ENCODE measurements at regions of chr5 and their contacts with region 1.

Region 1: DNA sequence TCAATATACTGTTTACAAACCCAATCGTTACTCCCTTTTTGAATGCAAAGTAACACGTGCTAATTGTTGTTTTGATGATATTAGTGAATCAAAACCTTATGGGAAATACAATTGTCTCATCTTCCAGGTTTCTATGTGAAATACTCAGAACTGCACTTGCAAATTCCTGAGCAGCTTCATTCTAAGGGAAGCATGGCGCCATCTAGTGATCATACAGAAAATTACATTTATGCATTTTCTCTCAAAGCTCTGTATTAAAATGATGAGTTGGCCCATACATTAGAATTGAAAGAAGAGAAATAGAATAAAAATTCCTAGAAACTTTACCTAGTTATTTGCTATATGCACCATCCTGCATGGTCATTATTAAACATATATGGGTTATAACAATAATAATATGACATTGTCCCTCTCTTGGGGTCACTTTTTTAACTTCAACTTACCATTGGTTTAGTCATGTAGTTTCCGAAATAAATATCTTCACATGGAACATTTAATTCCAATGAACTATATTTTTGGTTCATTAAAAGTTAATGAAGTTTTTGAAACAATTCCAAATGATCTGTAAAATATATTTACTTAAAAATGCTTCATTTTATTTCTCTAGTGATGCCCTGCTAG is 220.0 kb downstream of the PDE4D start:
- DNase-seq: peak; percentile 14 to 68
- ATAC-seq: peak; percentile 39 to 78; a peak in 3 of 6 replicates
- H3K4me3 ChIP-seq: no peak overlapping the region
- H3K27ac ChIP-seq: peak overlapping the region; percentile 45 to 62
- H3K4me1 ChIP-seq: peaks cover 35% of the 10 kb centered on the region
- CTCF ChIP-seq: peak; percentile 97
- EP300 ChIP-seq: no peak
- POLR2A ChIP-seq: no peak
- RAD21 ChIP-seq: peak; percentile 90 to 93

Region 2: GRCh38 chr5:58523956-58524355 is 1149.6 kb before region 1 on chr5:
- CTCF ChIA-PET with region 1: no interaction called
- POLR2A ChIA-PET with region 1: no interaction called
- DNase-seq: no peak
- ATAC-seq: no peak
- H3K4me3 ChIP-seq: no peak overlapping the region
- H3K27ac ChIP-seq: no peak overlapping the region
- H3K4me1 ChIP-seq: no peaks in the 10 kb centered on the region
- CTCF ChIP-seq: no peak
- EP300 ChIP-seq: no peak
- POLR2A ChIP-seq: no peak
- RAD21 ChIP-seq: no peak

Region 3: GRCh38 chr5:59390074-59390659 is 283.4 kb before region 1 on chr5:
- CTCF ChIA-PET with region 1: interaction called, 10 read pairs
- POLR2A ChIA-PET with region 1: no interaction called
- DNase-seq: peak in 1 of 2 experiments; percentile 48
- ATAC-seq: no peak
- H3K4me3 ChIP-seq: no peak overlapping the region
- H3K27ac ChIP-seq: peak overlapping the region; percentile 51 to 64; a peak in 3 of 6 replicates
- H3K4me1 ChIP-seq: peaks cover 54% of the 10 kb centered on the region
- CTCF ChIP-seq: peak; percentile 81
- EP300 ChIP-seq: no peak
- POLR2A ChIP-seq: no peak
- RAD21 ChIP-seq: peak; percentile 71 to 86

Region 4: DNA sequence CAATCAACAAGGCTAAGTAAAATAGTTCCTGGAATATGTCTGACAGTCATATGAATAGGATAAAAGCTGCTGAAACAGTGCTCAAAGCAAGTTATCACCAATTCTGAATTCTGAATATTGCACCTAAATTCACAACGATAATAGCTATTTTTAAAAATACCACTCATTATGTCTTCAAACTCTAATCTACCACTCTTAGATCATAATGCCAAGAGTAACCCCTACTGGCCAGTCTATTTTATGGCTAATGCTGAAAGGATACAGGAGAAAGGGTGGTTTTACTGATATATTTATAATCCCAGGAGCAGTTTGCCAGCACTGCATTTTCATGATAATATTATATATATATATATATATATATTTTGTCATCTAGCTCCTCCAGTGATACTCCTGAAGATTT is 12.8 kb before region 1 on chr5:
- CTCF ChIA-PET with region 1: interaction called, 22 read pairs
- POLR2A ChIA-PET with region 1: no interaction called
- DNase-seq: peak; percentile 36 to 65
- ATAC-seq: peak; percentile 64 to 70; a peak in 4 of 6 replicates
- H3K4me3 ChIP-seq: no peak overlapping the region
- H3K27ac ChIP-seq: peak overlapping the region; percentile 71 to 76
- H3K4me1 ChIP-seq: peaks cover 100% of the 10 kb centered on the region
- CTCF ChIP-seq: peak; percentile 75
- EP300 ChIP-seq: no peak
- POLR2A ChIP-seq: no peak
- RAD21 ChIP-seq: peak; percentile 87 to 90

Region 5: GRCh38 chr5:59698207-59699178 is 24.9 kb after region 1 on chr5:
- CTCF ChIA-PET with region 1: no interaction called
- POLR2A ChIA-PET with region 1: no interaction called
- DNase-seq: no peak
- ATAC-seq: no peak
- H3K4me3 ChIP-seq: no peak overlapping the region
- H3K27ac ChIP-seq: no peak overlapping the region
- H3K4me1 ChIP-seq: peaks cover 13% of the 10 kb centered on the region; the same call in 2 of the 3 replicates
- CTCF ChIP-seq: no peak
- EP300 ChIP-seq: no peak
- POLR2A ChIP-seq: no peak
- RAD21 ChIP-seq: no peak

Region 6: DNA sequence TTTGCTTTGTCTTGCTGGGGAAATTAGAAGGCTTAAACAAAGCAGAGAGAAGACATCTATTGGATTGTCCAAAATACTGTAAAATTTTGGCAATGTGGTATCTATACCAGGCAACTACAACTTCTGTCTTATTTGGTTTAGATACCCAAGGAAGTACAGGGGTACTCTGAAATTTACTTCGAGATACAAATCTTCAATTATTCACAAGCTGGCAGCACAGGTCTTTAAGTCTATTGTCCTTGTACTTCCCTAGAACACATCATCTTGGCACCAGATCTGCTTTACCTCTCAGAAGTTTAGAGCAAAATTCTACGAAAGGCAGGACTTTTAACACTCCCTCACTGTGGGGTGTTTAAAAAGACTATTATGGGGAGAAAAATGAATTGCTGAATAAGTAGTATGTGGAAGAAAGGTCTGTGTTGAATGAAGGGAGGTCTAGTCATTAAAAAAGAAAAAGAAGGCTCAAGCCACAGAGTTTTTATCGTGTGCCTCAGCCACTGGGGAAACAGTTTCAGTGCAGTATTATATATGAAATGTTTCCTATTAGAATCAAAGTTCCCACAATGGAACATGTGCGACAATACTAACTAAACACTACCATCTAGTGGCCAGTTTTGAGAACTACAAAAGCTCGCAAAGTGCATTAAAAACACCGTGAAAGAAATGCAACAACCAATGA is 126.3 kb after region 1 on chr5:
- CTCF ChIA-PET with region 1: interaction called, 12 read pairs
- POLR2A ChIA-PET with region 1: interaction called, 3 read pairs
- DNase-seq: peak; percentile 29 to 68
- ATAC-seq: peak; percentile 80 to 84
- H3K4me3 ChIP-seq: peak overlapping the region; percentile 22; the same call in 2 of the 3 replicates
- H3K27ac ChIP-seq: peak overlapping the region; percentile 90 to 95
- H3K4me1 ChIP-seq: peaks cover 48% of the 10 kb centered on the region
- CTCF ChIP-seq: peak; percentile 91
- EP300 ChIP-seq: no peak
- POLR2A ChIP-seq: no peak
- RAD21 ChIP-seq: peak; percentile 94 to 96